ENCODE measurements at regions of chr3 and their contacts with region 1.

Region 1: DNA sequence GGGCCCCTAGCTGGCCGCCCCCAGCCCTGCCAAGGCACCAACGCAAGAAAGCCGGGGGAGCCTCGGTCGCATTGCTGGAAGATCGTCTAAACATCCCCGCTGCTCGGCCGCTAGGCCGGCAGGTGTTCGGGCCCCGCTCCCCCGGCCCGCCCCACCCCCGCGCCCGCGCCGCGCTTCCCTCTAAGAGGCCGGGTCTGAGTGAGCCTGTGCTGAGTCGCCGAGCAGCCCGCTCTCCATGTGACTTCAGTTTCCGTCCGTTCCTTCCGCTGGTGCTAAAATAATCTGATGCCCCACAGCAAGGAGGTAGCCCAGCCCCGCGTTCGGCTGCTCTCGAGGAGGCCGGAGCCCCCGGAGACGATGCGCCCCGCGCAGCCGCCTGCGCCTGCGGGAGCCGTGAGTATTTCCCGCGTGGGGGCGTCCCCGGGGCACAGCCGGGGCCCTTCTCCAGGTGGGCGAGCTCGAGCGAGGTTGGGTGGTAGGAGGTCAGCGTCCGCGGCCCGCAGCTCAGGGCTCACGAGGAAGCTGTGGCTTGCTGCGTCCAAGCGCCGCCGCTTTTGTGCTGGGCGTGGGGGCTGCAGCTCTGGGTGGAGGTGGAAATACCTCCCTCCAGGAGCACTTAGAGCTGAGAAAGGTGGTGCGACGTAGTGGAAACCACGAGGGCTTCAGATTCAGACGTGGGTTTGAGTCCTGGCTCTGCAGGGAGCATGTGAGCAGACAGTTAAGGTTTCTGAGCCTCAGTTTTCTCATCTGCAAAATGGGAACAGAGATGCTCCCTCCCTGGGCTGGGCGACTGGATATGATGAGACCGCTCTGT is at the start of gene NRROS:
- DNase-seq: peak; percentile 86
- H3K4me3 Mint-ChIP-seq: peak within 1 kb of the TSS; percentile 88
- H3K27ac Mint-ChIP-seq: peak within 1 kb of the TSS; percentile 94
- H3K4me1 Mint-ChIP-seq: peaks cover 64% of the 10 kb centered on the region
- H3K27me3 Mint-ChIP-seq: no peaks in the 10 kb centered on the region
- total RNA-seq, gene NRROS: 24.5 to 25.3 TPM

Region 2: GRCh38 chr3:196590279-196590678 is 49.4 kb before region 1 on chr3:
- CTCF ChIA-PET with region 1: no interaction called
- POLR2A ChIA-PET with region 1: no interaction called
- intact Hi-C with region 1: no loop called
- DNase-seq: no peak
- H3K4me3 Mint-ChIP-seq: no peak overlapping the region
- H3K27ac Mint-ChIP-seq: no peak overlapping the region
- H3K4me1 Mint-ChIP-seq: no peaks in the 10 kb centered on the region
- H3K27me3 Mint-ChIP-seq: no peaks in the 10 kb centered on the region

Region 3: GRCh38 chr3:196624067-196624790 is 15.5 kb before region 1 on chr3:
- CTCF ChIA-PET with region 1: interaction called, 5 read pairs
- POLR2A ChIA-PET with region 1: interaction called, 12 read pairs
- intact Hi-C with region 1: loop called (anchors 2 kb)
- DNase-seq: peak; percentile 61
- H3K4me3 Mint-ChIP-seq: peak overlapping the region; percentile 22
- H3K27ac Mint-ChIP-seq: no peak overlapping the region
- H3K4me1 Mint-ChIP-seq: peaks cover 25% of the 10 kb centered on the region
- H3K27me3 Mint-ChIP-seq: no peaks in the 10 kb centered on the region

Region 4: GRCh38 chr3:196711838-196712513 is 72.3 kb after region 1 on chr3 and contains the starts of genes CEP19 and PIGX:
- CTCF ChIA-PET with region 1: no interaction called
- POLR2A ChIA-PET with region 1: interaction called, 3 read pairs
- intact Hi-C with region 1: loop called (anchors 2 kb)
- DNase-seq: peak; percentile 95
- H3K4me3 Mint-ChIP-seq: peak within 1 kb of the TSS; percentile 81
- H3K27ac Mint-ChIP-seq: peak within 1 kb of the TSS; percentile 94
- H3K4me1 Mint-ChIP-seq: peaks cover 27% of the 10 kb centered on the region
- H3K27me3 Mint-ChIP-seq: no peaks in the 10 kb centered on the region
- total RNA-seq, gene CEP19: 6.5 to 6.6 TPM
- total RNA-seq, gene PIGX: 47.5 to 49.2 TPM

Region 5: GRCh38 chr3:196739671-196740480 is 100.2 kb after region 1 on chr3 and contains the start of gene PAK2:
- CTCF ChIA-PET with region 1: no interaction called
- POLR2A ChIA-PET with region 1: no interaction called
- intact Hi-C with region 1: loop called (anchors 2 kb)
- DNase-seq: peak; percentile 92
- H3K4me3 Mint-ChIP-seq: peak within 1 kb of the TSS; percentile 98
- H3K27ac Mint-ChIP-seq: peak within 1 kb of the TSS; percentile 96
- H3K4me1 Mint-ChIP-seq: peaks cover 28% of the 10 kb centered on the region
- H3K27me3 Mint-ChIP-seq: no peaks in the 10 kb centered on the region
- total RNA-seq, gene PAK2: 98.4 to 101 TPM

Region 6: GRCh38 chr3:197298341-197298857 is 658.7 kb after region 1 on chr3 and contains the start of gene DLG1:
- CTCF ChIA-PET with region 1: no interaction called
- POLR2A ChIA-PET with region 1: no interaction called
- intact Hi-C with region 1: loop called (anchors 10 kb)
- DNase-seq: peak; percentile 91
- H3K4me3 Mint-ChIP-seq: peak within 1 kb of the TSS; percentile 97
- H3K27ac Mint-ChIP-seq: peak within 1 kb of the TSS; percentile 89
- H3K4me1 Mint-ChIP-seq: peaks cover 23% of the 10 kb centered on the region
- H3K27me3 Mint-ChIP-seq: peaks cover 24% of the 10 kb centered on the region
- total RNA-seq, gene DLG1: 52.6 to 53.3 TPM